Mammary epithelial cell (primary cell): ENCODE measurements at regions of chr2 and their contacts with region 1.

Region 1: GRCh38 chr2:96801005-96801785 is 14.9 kb upstream of the CNNM3 start:
- DNase-seq: peak; percentile 43
- H3K4me3 ChIP-seq: no peak overlapping the region
- H3K27ac ChIP-seq: no peak overlapping the region
- H3K4me1 ChIP-seq: no peaks in the 10 kb centered on the region
- H3K27me3 ChIP-seq: no peaks in the 10 kb centered on the region
- CTCF ChIP-seq: peak; percentile 83 to 92

Region 2: DNA sequence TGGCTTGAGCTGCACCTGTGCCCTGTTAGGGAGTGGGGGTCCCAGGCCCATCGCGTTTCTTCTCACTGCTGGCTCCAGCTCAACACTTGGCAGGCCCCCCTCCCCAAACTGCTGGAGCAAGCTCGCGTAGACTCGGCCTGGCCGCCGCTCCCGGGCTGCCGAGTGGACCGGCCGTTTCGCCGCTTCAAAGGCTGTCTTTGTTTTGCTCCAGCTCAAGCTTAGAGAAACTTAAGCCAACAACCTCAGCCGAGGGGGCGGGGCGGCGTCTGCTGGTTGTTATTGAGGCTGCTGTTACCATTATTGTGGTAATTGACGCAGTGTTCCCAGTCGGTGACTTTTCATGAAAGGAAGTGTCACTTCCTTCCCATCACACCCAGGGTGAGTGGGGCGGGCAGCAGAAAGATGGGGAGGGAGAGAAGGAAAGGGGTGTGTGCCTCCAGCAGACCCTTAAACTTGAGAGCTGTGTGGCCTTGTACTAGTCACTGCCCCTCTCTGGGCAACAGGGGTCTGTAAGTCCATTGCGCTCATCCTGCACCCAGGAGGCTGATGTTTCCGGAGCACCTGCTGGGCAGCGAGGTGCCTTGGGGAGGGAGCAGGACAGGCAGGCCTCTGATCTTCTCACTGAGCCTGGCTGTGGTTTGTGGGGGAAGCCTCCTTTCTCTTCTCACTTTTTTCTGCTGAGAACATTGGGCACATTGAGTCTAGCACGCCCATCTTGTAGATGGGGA is 262.5 kb before region 1 on chr2:
- CTCF ChIA-PET with region 1: no interaction called
- dilution Hi-C with region 1: no loop called
- in situ Hi-C with region 1: no loop called
- intact Hi-C with region 1: no loop called
- DNase-seq: peak; percentile 32
- H3K4me3 ChIP-seq: no peak overlapping the region
- H3K27ac ChIP-seq: no peak overlapping the region
- H3K4me1 ChIP-seq: peaks cover 53% of the 10 kb centered on the region
- H3K27me3 ChIP-seq: no peaks in the 10 kb centered on the region
- CTCF ChIP-seq: no peak

Region 3: GRCh38 chr2:96760036-96760985 is 40.9 kb before region 1 on chr2 and contains the start of gene CNNM4:
- CTCF ChIA-PET with region 1: interaction called, 10 read pairs
- dilution Hi-C with region 1: no loop called
- in situ Hi-C with region 1: no loop called
- intact Hi-C with region 1: loop called (anchors 2 kb)
- DNase-seq: peak; percentile 90
- H3K4me3 ChIP-seq: peak within 1 kb of the TSS; percentile 46 to 86 (median 78)
- H3K27ac ChIP-seq: no peak within 1 kb of the TSS
- H3K4me1 ChIP-seq: peaks cover 51% of the 10 kb centered on the region
- H3K27me3 ChIP-seq: no peaks in the 10 kb centered on the region
- CTCF ChIP-seq: peak in 1 of 2 donors; percentile 24
- total RNA-seq, gene CNNM4: 8.1 to 8.2 TPM

Region 4: GRCh38 chr2:96819128-96819875 is 18.1 kb after region 1 on chr2:
- CTCF ChIA-PET with region 1: no interaction called
- dilution Hi-C with region 1: no loop called
- in situ Hi-C with region 1: no loop called
- intact Hi-C with region 1: no loop called
- DNase-seq: no peak
- H3K4me3 ChIP-seq: no peak overlapping the region
- H3K27ac ChIP-seq: no peak overlapping the region
- H3K4me1 ChIP-seq: peaks cover 18% of the 10 kb centered on the region
- H3K27me3 ChIP-seq: no peaks in the 10 kb centered on the region
- CTCF ChIP-seq: no peak

Region 5: GRCh38 chr2:96888072-96889011 is 87.1 kb after region 1 on chr2:
- CTCF ChIA-PET with region 1: no interaction called
- dilution Hi-C with region 1: no loop called
- in situ Hi-C with region 1: no loop called
- intact Hi-C with region 1: no loop called
- DNase-seq: peak; percentile 50
- H3K4me3 ChIP-seq: no peak overlapping the region
- H3K27ac ChIP-seq: no peak overlapping the region
- H3K4me1 ChIP-seq: peaks cover 16% of the 10 kb centered on the region
- H3K27me3 ChIP-seq: no peaks in the 10 kb centered on the region
- CTCF ChIP-seq: no peak